ENCODE measurements at regions of chr17 and their contacts with region 1.

Region 1: GRCh38 chr17:64262417-64263260 is at the start of gene TEX2:
- DNase-seq: peak; percentile 62 to 82 (median 77)
- ATAC-seq: peak; percentile 62
- H3K4me3 ChIP-seq: peak within 1 kb of the TSS; percentile 94
- H3K4me1 ChIP-seq: peaks cover 29% of the 10 kb centered on the region
- CTCF ChIP-seq: no peak
- total RNA-seq, gene TEX2: 27.5 to 38.5 (median 30.2) TPM

Region 2: GRCh38 chr17:63834431-63835166 is 428.0 kb before region 1 on chr17:
- intact Hi-C with region 1: no loop called
- DNase-seq: peak in 2 of 3 donors; percentile 55 to 67
- ATAC-seq: peak; percentile 77
- H3K4me3 ChIP-seq: no peak overlapping the region
- H3K4me1 ChIP-seq: peaks cover 15% of the 10 kb centered on the region
- CTCF ChIP-seq: peak; percentile 20

Region 3: GRCh38 chr17:64129764-64130558 is 132.7 kb before region 1 on chr17 and contains the start of gene ERN1:
- intact Hi-C with region 1: no loop called
- DNase-seq: peak; percentile 94 to 96 (median 95)
- ATAC-seq: peak; percentile 95
- H3K4me3 ChIP-seq: peak within 1 kb of the TSS; percentile 80
- H3K4me1 ChIP-seq: peaks cover 17% of the 10 kb centered on the region
- CTCF ChIP-seq: no peak
- total RNA-seq, gene ERN1: 18.4 to 27.1 (median 21.7) TPM

Region 4: GRCh38 chr17:64145757-64146417 is 116.8 kb before region 1 on chr17:
- intact Hi-C with region 1: loop called in 1 of 2 experiments (anchors 5 kb)
- DNase-seq: peak; percentile 93 to 97 (median 97)
- ATAC-seq: peak; percentile 96
- H3K4me3 ChIP-seq: peak overlapping the region; percentile 68
- H3K4me1 ChIP-seq: no peaks in the 10 kb centered on the region
- CTCF ChIP-seq: no peak

Region 5: GRCh38 chr17:64160378-64160777 is 102.3 kb before region 1 on chr17:
- intact Hi-C with region 1: loop called in 1 of 2 experiments (anchors 10 kb)
- DNase-seq: no peak
- ATAC-seq: no peak
- H3K4me3 ChIP-seq: no peak overlapping the region
- H3K4me1 ChIP-seq: peaks cover 5% of the 10 kb centered on the region
- CTCF ChIP-seq: no peak